ENCODE measurements at regions of chr18 and their contacts with region 1.

Region 1: GRCh38 chr18:24726727-24727492 is 266.5 kb downstream of the HRH4 start:
- DNase-seq: peak; percentile 45
- ATAC-seq: peak; percentile 54
- H3K4me3 ChIP-seq: no peak overlapping the region
- H3K27ac ChIP-seq: no peak overlapping the region
- H3K4me1 ChIP-seq: no peaks in the 10 kb centered on the region
- H3K27me3 ChIP-seq: no peaks in the 10 kb centered on the region
- CTCF ChIP-seq: peak; percentile 76
- EP300 ChIP-seq: no peak
- POLR2A ChIP-seq: no peak
- RAD21 ChIP-seq: peak; percentile 57; the same call in 1 of the 2 replicates

Region 2: DNA sequence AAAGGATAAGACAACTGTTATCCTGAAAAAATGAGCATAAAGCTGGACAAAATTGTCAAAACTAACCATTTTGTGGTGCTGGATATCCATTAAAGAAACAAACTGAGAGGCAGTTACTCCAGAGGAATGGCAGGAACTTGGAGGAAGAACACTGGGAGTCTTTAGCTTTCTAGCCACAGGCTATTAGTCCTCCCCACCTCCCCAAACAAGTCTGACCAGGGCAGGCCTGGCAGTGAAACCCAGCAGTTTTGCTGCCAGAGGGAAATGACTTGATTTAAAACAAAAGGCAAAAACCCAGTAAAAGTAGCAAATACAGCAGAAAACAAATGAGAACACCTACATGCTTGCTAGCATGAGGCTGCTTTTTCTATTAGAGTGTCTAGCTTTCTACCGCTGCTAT is 364.2 kb before region 1 on chr18:
- CTCF ChIA-PET with region 1: no interaction called
- POLR2A ChIA-PET with region 1: no interaction called
- in situ Hi-C with region 1: loop called (anchors 25 kb)
- intact Hi-C with region 1: loop called (anchors 2 kb)
- DNase-seq: no peak
- ATAC-seq: no peak
- H3K4me3 ChIP-seq: no peak overlapping the region
- H3K27ac ChIP-seq: no peak overlapping the region
- H3K4me1 ChIP-seq: no peaks in the 10 kb centered on the region
- H3K27me3 ChIP-seq: no peaks in the 10 kb centered on the region
- CTCF ChIP-seq: no peak
- EP300 ChIP-seq: no peak
- POLR2A ChIP-seq: no peak
- RAD21 ChIP-seq: no peak

Region 3: GRCh38 chr18:24368749-24369148 is 358.2 kb before region 1 on chr18:
- CTCF ChIA-PET with region 1: no interaction called
- POLR2A ChIA-PET with region 1: no interaction called
- in situ Hi-C with region 1: loop called (anchors 25 kb)
- intact Hi-C with region 1: no loop called
- DNase-seq: no peak
- ATAC-seq: no peak
- H3K4me3 ChIP-seq: no peak overlapping the region
- H3K27ac ChIP-seq: no peak overlapping the region
- H3K4me1 ChIP-seq: no peaks in the 10 kb centered on the region
- H3K27me3 ChIP-seq: 0 out of 5 replicates have a peak, but pooled peaks cover 0 to 4% of the 10 kb centered on the region in 2 experiments
- CTCF ChIP-seq: no peak
- EP300 ChIP-seq: no peak
- POLR2A ChIP-seq: no peak
- RAD21 ChIP-seq: no peak

Region 4: DNA sequence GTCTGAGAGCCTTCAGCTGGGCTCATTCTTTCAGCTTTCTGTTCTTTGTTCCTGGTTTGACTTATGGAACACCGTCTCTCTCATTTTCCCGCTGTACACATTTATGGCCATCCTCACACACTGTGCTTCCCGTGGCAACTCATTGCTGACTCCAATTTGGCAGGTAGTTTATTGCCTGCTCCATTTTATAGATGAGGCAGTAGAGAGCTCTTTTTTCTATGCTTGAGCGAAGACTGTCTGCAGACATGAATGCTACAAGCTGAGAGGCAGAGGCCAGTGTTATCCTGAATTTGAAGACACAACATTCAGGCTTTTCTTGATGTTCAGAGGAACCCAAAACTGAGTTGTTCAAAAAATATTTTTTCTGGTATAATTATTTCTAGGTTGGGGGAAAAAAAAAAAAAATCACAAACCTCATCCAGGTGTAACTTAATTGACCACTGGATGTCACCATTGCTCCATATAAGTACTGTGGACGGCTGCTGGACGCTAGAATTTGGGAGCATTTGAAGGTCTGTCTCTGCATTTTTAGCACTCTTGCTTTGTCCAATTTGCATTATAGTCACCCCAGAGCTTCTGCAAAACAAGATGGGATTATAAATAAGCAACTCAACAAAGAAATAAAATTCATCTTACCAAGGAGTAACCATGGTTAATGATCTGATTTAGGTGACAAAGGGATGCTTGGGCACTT is 183.0 kb before region 1 on chr18:
- CTCF ChIA-PET with region 1: interaction called, 13 read pairs
- POLR2A ChIA-PET with region 1: no interaction called
- in situ Hi-C with region 1: no loop called
- intact Hi-C with region 1: no loop called
- DNase-seq: peak; percentile 22
- ATAC-seq: peak; percentile 58; the same call in 2 of the 3 replicates
- H3K4me3 ChIP-seq: no peak overlapping the region
- H3K27ac ChIP-seq: no peak overlapping the region
- H3K4me1 ChIP-seq: no peaks in the 10 kb centered on the region
- H3K27me3 ChIP-seq: no peaks in the 10 kb centered on the region; a peak in 1 of 5 replicates
- CTCF ChIP-seq: peak; percentile 54
- EP300 ChIP-seq: no peak
- POLR2A ChIP-seq: no peak
- RAD21 ChIP-seq: no peak

Region 5: DNA sequence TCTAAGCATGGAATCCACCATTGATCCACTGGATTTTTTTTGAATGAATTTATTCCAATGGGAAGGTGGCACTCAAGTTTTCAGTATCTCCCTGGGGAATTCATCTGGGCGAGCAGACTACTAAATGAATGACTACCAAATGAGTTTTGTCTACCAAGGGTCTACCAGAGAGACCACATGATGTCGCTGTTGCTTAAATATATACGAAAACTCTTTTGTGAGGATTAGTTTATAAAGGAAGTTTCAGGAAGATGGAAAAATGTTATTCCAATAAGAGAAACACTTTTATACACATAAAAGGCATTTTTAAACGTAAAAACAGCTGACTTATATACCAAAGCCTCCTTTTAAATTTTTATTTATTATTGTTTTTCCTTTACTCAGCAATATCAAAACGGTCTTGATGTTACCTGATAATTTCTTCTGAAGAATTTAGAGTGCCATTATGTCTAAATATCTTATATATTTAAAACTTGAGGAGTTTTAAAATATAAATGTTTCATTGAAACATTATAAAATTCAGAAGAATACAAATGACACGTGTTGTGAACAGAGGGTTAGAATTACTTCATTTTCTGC is 126.7 kb before region 1 on chr18:
- CTCF ChIA-PET with region 1: interaction called, 31 read pairs
- POLR2A ChIA-PET with region 1: no interaction called
- in situ Hi-C with region 1: no loop called
- intact Hi-C with region 1: loop called (anchors 1 kb)
- DNase-seq: peak; percentile 40
- ATAC-seq: 0 out of 3 replicates have a peak, but pooled peaks have one; percentile 36
- H3K4me3 ChIP-seq: no peak overlapping the region
- H3K27ac ChIP-seq: no peak overlapping the region
- H3K4me1 ChIP-seq: no peaks in the 10 kb centered on the region
- H3K27me3 ChIP-seq: peaks cover 2 to 4% of the 10 kb centered on the region in 2 experiments; a peak in 2 of 5 replicates
- CTCF ChIP-seq: peak; percentile 50
- EP300 ChIP-seq: no peak
- POLR2A ChIP-seq: no peak
- RAD21 ChIP-seq: no peak